Mammary epithelial cell (primary cell): ENCODE measurements at regions of chr1 and their contacts with region 1.

Region 1: DNA sequence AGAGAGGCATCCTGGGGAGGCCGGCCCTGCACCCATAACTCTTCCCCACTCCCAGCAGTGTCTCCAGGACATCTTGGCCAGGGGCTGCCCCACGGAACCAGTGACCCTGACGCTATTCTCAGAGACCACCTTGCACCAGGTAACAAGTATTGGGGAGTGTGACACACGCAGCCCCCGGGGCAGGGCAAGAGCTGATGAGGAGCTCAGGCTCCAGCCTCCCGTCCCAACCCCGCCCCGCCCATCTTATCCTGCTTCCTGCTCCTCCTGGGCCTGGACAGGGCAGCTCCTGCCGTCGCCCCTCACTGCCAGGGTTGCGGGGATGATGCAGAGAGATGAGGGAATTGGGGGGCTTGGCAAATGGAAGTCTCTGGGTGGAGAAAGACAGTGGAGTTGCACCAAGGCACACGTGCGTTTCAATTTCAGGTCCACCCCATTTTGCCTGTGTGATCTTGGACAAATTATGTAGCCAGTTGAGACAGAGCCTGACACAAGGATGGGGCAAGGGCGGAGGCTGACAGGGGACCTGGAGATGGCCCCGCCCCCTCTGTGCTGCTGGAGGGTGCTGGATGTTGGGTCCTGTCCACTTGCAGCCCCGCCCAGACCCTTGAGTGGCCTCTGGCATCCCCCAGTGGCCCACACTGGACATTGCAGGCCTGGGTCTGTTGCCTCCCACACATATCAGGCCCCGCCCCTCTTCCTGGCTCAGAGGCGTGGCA is 10.7 kb downstream of the CLCNKA start:
- DNase-seq: peak; percentile 58
- H3K4me3 ChIP-seq: no peak overlapping the region
- H3K27ac ChIP-seq: no peak overlapping the region
- H3K4me1 ChIP-seq: peaks cover 6% of the 10 kb centered on the region
- H3K27me3 ChIP-seq: no peaks in the 10 kb centered on the region
- CTCF ChIP-seq: peak; percentile 86 to 97

Region 2: GRCh38 chr1:16055613-16056520 is 23.3 kb after region 1 on chr1:
- CTCF ChIA-PET with region 1: no interaction called
- dilution Hi-C with region 1: no loop called
- in situ Hi-C with region 1: no loop called
- intact Hi-C with region 1: loop called (anchors 2 kb)
- DNase-seq: peak; percentile 73
- H3K4me3 ChIP-seq: no peak overlapping the region
- H3K27ac ChIP-seq: no peak overlapping the region
- H3K4me1 ChIP-seq: no peaks in the 10 kb centered on the region
- H3K27me3 ChIP-seq: no peaks in the 10 kb centered on the region
- CTCF ChIP-seq: peak; percentile 88 to 98

Region 3: DNA sequence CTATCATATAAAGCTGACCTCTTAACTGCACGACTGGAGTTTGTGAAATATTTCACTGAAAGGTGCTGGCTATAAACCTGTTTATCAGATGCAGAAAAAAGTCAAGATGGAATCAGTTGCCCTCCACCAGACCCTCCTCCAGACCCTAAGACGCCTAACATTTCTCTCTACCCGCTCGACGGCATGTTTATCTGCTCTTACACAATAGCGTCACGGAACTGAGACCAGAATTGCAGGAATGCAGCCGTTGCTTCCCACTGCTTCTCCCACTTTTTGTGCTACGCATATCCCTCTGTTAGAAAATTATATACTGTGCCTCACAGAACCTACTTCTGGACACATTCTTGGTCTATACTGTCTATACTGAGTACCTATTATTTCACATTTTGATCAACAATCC is 69.1 kb after region 1 on chr1:
- CTCF ChIA-PET with region 1: no interaction called
- dilution Hi-C with region 1: no loop called
- in situ Hi-C with region 1: no loop called
- intact Hi-C with region 1: no loop called
- DNase-seq: no peak
- H3K4me3 ChIP-seq: no peak overlapping the region
- H3K27ac ChIP-seq: no peak overlapping the region
- H3K4me1 ChIP-seq: no peaks in the 10 kb centered on the region
- H3K27me3 ChIP-seq: no peaks in the 10 kb centered on the region
- CTCF ChIP-seq: no peak